Naive thymus-derived CD4-positive, alpha-beta T cell (primary cell): ENCODE measurements at regions of chr2 and their contacts with region 1.

Region 1: GRCh38 chr2:42132966-42133641 is 36.0 kb upstream of the EML4 start:
- DNase-seq: peak; percentile 53 to 92 (median 78)
- ATAC-seq: peak; percentile 94
- H3K4me3 ChIP-seq: peak overlapping the region; percentile 38
- H3K4me3 Mint-ChIP-seq: peak overlapping the region; percentile 66 to 86 (median 76)
- H3K27ac ChIP-seq: peak overlapping the region; percentile 82
- H3K27ac Mint-ChIP-seq: peak overlapping the region; percentile 68 to 98 (median 96)
- H3K4me1 ChIP-seq: peaks cover 81 to 89% of the 10 kb centered on the region in 2 donors
- H3K4me1 Mint-ChIP-seq: peaks cover 57 to 95% (median 93%) of the 10 kb centered on the region in 7 donors
- H3K27me3 ChIP-seq: no peaks in the 10 kb centered on the region
- H3K27me3 Mint-ChIP-seq: no peaks in the 10 kb centered on the region

Region 2: GRCh38 chr2:42086500-42086953 is 46.6 kb before region 1 on chr2:
- CTCF ChIA-PET with region 1: no interaction called
- POLR2A ChIA-PET with region 1: no interaction called
- intact Hi-C with region 1: no loop called
- DNase-seq: peak in 7 of 9 donors; percentile 18 to 59 (median 50)
- ATAC-seq: peak; percentile 62
- H3K4me3 ChIP-seq: no peak overlapping the region
- H3K4me3 Mint-ChIP-seq: no peak overlapping the region
- H3K27ac ChIP-seq: no peak overlapping the region
- H3K27ac Mint-ChIP-seq: no peak overlapping the region
- H3K4me1 ChIP-seq: no peaks in the 10 kb centered on the region
- H3K4me1 Mint-ChIP-seq: peaks cover 0 to 10% (median 7%) of the 10 kb centered on the region in 7 donors
- H3K27me3 ChIP-seq: no peaks in the 10 kb centered on the region
- H3K27me3 Mint-ChIP-seq: peaks cover 0 to 25% (median 6%) of the 10 kb centered on the region in 5 donors

Region 3: DNA sequence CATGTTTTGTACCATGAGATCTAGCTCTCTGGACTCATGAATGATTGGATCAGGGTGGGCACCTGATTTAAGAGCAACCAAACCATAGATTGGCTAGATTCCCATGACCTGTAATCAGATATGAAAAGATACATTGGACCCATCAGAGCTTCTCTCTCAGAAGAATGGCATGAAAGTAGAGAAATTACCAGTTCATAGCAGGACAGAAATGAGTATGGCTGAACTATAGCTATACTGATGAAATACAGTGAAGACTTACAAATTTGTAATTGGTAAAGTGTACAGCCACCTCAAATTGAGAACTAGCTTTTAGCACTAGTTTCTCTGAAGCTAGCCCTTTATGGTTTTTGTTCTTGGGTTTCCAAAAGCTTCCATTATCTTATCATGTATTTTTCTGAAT is 17.1 kb after region 1 on chr2:
- CTCF ChIA-PET with region 1: interaction called, 3 read pairs
- POLR2A ChIA-PET with region 1: interaction called, 8 read pairs
- intact Hi-C with region 1: loop called in 1 of 2 experiments (anchors 2 kb)
- DNase-seq: no peak
- ATAC-seq: no peak
- H3K4me3 ChIP-seq: no peak overlapping the region
- H3K4me3 Mint-ChIP-seq: no peak overlapping the region
- H3K27ac ChIP-seq: no peak overlapping the region
- H3K27ac Mint-ChIP-seq: peak overlapping the region in 2 of 9 donors; percentile 21 to 41
- H3K4me1 ChIP-seq: no peaks in the 10 kb centered on the region
- H3K4me1 Mint-ChIP-seq: peaks cover 5 to 11% (median 7%) of the 10 kb centered on the region in 7 donors
- H3K27me3 ChIP-seq: no peaks in the 10 kb centered on the region
- H3K27me3 Mint-ChIP-seq: peaks cover 0 to 3% (median 0%) of the 10 kb centered on the region in 5 donors

Region 4: GRCh38 chr2:42249887-42250286 is 116.8 kb after region 1 on chr2:
- CTCF ChIA-PET with region 1: no interaction called
- POLR2A ChIA-PET with region 1: no interaction called
- intact Hi-C with region 1: no loop called
- DNase-seq: no peak
- ATAC-seq: no peak
- H3K4me3 ChIP-seq: no peak overlapping the region
- H3K4me3 Mint-ChIP-seq: peak overlapping the region in 4 of 10 donors; percentile 5 to 10 (median 10)
- H3K27ac ChIP-seq: no peak overlapping the region
- H3K27ac Mint-ChIP-seq: peak overlapping the region in 5 of 9 donors; percentile 12 to 52 (median 15)
- H3K4me1 ChIP-seq: peaks cover 6 to 31% of the 10 kb centered on the region in 2 donors
- H3K4me1 Mint-ChIP-seq: peaks cover 35 to 82% (median 76%) of the 10 kb centered on the region in 7 donors
- H3K27me3 ChIP-seq: no peaks in the 10 kb centered on the region
- H3K27me3 Mint-ChIP-seq: no peaks in the 10 kb centered on the region